CD4-positive, alpha-beta memory T cell (primary cell): ENCODE measurements at regions of chrX and their contacts with region 1.

Region 1: GRCh38 chrX:1491851-1492349 is 39.2 kb upstream of the ASMTL start:
- DNase-seq: peak; percentile 55 to 74 (median 71)
- H3K4me3 ChIP-seq: no peak overlapping the region
- H3K4me3 Mint-ChIP-seq: peak overlapping the region in 3 of 8 donors; percentile 8 to 36 (median 21)
- H3K27ac ChIP-seq: no peak overlapping the region
- H3K27ac Mint-ChIP-seq: peak overlapping the region; percentile 48 to 92 (median 87)
- H3K4me1 ChIP-seq: peaks cover 11% of the 10 kb centered on the region
- H3K4me1 Mint-ChIP-seq: peaks cover 16 to 45% (median 32%) of the 10 kb centered on the region in 4 donors
- H3K27me3 ChIP-seq: no peaks in the 10 kb centered on the region
- H3K27me3 Mint-ChIP-seq: no peaks in the 10 kb centered on the region

Region 2: DNA sequence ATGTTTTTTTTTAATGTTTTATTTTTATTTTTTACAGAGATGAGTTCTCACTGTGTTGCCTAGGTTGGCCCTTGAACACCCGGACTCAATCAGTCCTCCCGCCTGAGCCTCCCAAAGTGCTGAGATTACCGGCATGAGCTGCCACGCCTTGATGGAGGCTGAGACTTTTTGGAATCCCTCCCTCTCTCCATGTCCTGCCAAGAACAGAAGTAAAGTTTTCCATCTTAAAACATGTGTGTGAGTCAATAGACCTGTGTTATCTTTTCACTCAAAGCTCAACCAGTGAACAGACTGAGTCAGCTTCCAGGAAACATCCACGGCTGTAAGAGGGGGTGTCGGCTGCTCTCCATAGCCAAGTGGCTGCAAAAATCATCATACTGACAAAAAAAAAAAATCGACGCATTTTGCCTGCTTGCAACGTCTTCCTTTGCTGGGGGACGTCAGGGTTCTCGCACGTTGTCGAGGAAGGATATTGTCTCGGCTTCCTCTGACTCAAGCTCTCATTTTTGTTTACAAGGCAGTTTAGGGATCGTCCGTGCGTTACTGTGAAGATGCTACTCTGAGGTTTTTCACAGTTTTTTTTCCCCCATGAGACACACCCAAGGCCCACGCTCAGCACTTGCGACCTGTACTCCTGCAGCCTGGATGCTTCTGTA is 29.2 kb before region 1 on chrX:
- CTCF ChIA-PET with region 1: no interaction called
- POLR2A ChIA-PET with region 1: no interaction called
- intact Hi-C with region 1: loop called (anchors 1 kb)
- DNase-seq: peak; percentile 87 to 95 (median 93)
- H3K4me3 ChIP-seq: no peak overlapping the region
- H3K4me3 Mint-ChIP-seq: peak overlapping the region; percentile 30 to 82 (median 60)
- H3K27ac ChIP-seq: peak overlapping the region; percentile 76
- H3K27ac Mint-ChIP-seq: peak overlapping the region; percentile 95 to 99 (median 98)
- H3K4me1 ChIP-seq: peaks cover 62% of the 10 kb centered on the region
- H3K4me1 Mint-ChIP-seq: peaks cover 37 to 61% (median 51%) of the 10 kb centered on the region in 4 donors
- H3K27me3 ChIP-seq: no peaks in the 10 kb centered on the region
- H3K27me3 Mint-ChIP-seq: no peaks in the 10 kb centered on the region